Endothelial cell of umbilical vein (primary cell): ENCODE measurements at regions of chr7 and their contacts with region 1.

Region 1: DNA sequence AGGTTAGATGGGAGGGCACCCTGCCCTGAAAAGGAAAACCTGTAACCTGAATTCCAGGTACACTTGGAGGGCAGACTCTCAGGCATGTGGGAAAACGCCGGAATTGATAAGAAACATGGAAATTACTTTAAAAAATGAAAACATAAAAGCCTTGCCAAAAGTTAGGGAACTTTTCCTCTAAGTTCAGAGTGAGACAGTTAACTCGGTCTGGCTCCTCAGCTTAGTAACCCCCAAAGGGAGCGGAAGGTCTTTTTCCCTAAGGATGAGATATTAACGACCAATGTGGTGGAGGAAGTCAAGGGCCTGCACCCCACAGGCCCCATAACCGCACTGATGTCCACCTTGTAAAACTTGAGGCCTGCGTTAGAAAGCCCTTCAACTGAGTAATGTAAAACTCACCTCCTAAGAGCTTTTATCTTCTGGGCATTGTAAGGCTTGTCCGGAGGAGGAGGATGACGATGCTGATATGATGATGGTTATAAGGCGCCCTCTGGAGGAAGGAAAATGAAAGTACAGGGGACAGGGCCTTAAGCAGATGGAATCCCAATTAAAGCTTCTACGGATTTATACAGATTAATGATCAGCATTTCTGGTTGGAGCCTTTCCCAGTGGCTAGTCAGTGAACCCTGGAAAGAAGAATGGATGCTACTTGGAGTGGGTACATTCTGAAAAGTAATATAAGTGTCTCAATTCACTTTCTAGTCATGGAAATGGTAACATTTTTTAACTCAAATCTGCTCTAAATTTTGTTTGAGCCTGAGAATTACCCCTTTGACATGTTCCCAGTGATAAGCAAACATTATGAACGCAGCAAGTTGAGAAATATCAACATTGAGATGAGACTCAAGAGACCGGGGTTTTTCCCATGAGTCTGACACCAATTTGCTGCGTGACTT is 694 bp downstream of the COL1A2 start:
- DNase-seq: peak; percentile 86
- H3K4me3 ChIP-seq: peak overlapping the region in 2 of 3 experiments; percentile 4 to 42
- H3K27ac ChIP-seq: no peak overlapping the region
- H3K4me1 ChIP-seq: peaks cover 10% of the 10 kb centered on the region
- H3K27me3 ChIP-seq: no peaks in the 10 kb centered on the region
- CTCF ChIP-seq: peak; percentile 61 to 70
- POLR2A ChIP-seq: no peak

Region 2: DNA sequence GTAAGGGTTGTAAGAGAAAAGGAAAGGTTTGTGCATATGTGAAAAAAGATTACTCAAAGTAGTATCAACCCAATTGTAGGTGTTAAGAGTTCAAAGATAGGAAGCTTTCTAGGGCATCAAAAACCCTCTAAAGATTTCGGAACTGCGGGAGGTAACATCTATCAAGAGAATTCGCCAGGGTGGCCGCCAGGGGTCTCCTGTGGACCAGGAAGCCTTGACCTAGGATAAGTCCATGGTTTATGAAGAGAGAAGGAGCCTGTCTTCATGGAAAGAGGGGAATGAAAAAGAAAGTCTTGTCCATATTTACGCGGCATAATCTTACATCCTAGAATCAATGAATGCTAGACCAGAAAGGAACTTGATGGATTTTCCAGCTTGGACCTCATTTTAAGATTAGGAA is 680.2 kb before region 1 on chr7:
- CTCF ChIA-PET with region 1: interaction called, 10 read pairs
- POLR2A ChIA-PET with region 1: no interaction called
- dilution Hi-C with region 1: no loop called
- intact Hi-C with region 1: loop called (anchors 10 kb)
- DNase-seq: peak; percentile 58
- H3K4me3 ChIP-seq: no peak overlapping the region
- H3K27ac ChIP-seq: no peak overlapping the region
- H3K4me1 ChIP-seq: no peaks in the 10 kb centered on the region
- H3K27me3 ChIP-seq: peaks cover 15 to 26% of the 10 kb centered on the region in 2 experiments
- CTCF ChIP-seq: peak; percentile 71 to 72
- POLR2A ChIP-seq: no peak

Region 3: DNA sequence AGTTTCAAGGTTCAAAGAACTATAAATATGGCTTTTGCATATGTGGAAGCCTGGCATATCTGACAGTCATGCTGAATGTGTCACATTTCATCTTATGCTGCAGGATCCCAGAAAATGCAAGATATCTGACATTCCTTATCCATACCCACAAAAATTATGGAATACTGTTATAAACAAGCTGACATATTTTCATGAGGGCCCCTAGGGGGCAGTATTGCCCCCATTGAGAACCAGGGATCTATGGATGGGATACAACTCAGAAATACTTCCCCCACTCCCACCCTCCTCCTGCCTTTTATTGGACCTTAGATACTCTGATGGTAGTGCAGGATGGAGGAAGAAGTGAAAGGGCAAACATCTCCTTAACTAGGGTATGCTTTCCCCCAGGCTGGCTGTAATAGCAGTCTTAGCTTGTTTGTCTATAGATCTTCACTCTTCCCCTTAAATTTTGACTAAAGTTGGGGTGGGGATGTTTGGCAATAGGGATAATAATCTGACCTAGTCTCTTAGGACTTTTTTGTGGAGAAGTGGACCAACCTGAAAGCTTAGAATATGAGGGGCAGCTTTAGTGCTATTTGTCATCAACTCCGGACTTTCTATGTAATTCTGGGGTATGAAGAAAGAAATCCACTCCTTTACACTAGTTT is 492.5 kb before region 1 on chr7:
- CTCF ChIA-PET with region 1: interaction called, 10 read pairs
- POLR2A ChIA-PET with region 1: no interaction called
- dilution Hi-C with region 1: no loop called
- intact Hi-C with region 1: no loop called
- DNase-seq: peak; percentile 83
- H3K4me3 ChIP-seq: no peak overlapping the region
- H3K27ac ChIP-seq: no peak overlapping the region
- H3K4me1 ChIP-seq: peaks cover 7% of the 10 kb centered on the region
- H3K27me3 ChIP-seq: peaks cover 3 to 12% of the 10 kb centered on the region in 2 experiments
- CTCF ChIP-seq: peak; percentile 75
- POLR2A ChIP-seq: no peak

Region 4: DNA sequence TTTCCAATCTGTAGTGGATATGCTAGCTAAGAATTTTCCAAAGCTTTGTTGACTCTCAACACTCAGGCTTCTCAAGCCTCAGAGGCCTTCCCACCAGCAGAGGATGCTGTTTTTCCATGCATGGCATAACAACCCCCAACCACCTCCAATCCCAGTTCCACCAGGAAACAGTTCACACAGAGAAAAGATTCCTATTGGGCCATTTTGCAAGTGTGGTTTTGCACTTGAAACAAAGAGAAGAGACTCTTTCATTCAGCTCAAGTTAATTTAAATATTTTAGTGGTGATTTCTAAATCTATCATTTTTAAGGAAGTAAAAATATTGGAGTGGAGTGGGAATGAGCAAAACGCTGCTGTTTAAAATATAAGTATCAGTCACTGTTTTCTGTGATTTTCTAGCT is 106.3 kb before region 1 on chr7:
- CTCF ChIA-PET with region 1: interaction called, 868 read pairs
- POLR2A ChIA-PET with region 1: interaction called, 5 read pairs
- dilution Hi-C with region 1: no loop called
- intact Hi-C with region 1: loop called (anchors 1 kb)
- DNase-seq: peak; percentile 87
- H3K4me3 ChIP-seq: no peak overlapping the region
- H3K27ac ChIP-seq: no peak overlapping the region
- H3K4me1 ChIP-seq: no peaks in the 10 kb centered on the region
- H3K27me3 ChIP-seq: no peaks in the 10 kb centered on the region
- CTCF ChIP-seq: peak; percentile 90 to 96
- POLR2A ChIP-seq: no peak

Region 5: GRCh38 chr7:94313926-94314325 is 81.5 kb before region 1 on chr7:
- CTCF ChIA-PET with region 1: interaction called, 31 read pairs
- POLR2A ChIA-PET with region 1: no interaction called
- dilution Hi-C with region 1: no loop called
- intact Hi-C with region 1: loop called (anchors 1 kb)
- DNase-seq: peak; percentile 96
- H3K4me3 ChIP-seq: peak overlapping the region in 1 of 3 experiments; percentile 33
- H3K27ac ChIP-seq: peak overlapping the region; percentile 78
- H3K4me1 ChIP-seq: peaks cover 34% of the 10 kb centered on the region
- H3K27me3 ChIP-seq: no peaks in the 10 kb centered on the region
- CTCF ChIP-seq: no peak
- POLR2A ChIP-seq: peak; percentile 24

Region 6: DNA sequence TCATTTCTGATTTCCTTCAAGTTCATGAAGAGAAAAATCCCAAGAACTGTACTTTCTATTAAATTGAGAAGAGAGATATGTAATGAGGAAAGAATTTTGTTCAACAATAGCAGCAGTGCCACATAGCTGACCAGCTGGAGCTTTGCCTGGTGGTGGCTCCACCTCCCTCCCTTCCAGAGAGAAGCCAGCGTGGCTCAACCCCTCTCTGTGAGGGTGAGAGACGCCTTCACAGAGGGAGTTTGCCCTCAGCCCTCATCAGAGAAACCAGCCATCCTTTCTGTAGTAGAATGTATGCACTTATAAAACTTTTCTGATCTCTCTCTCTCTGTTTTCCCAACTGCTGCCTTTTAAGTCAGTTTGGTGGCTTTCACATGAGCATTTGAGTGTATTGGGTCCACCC is 21.2 kb before region 1 on chr7:
- CTCF ChIA-PET with region 1: interaction called, 54 read pairs
- POLR2A ChIA-PET with region 1: no interaction called
- dilution Hi-C with region 1: no loop called
- intact Hi-C with region 1: loop called (anchors 1 kb)
- DNase-seq: peak; percentile 92
- H3K4me3 ChIP-seq: no peak overlapping the region
- H3K27ac ChIP-seq: peak overlapping the region; percentile 85
- H3K4me1 ChIP-seq: peaks cover 21% of the 10 kb centered on the region
- H3K27me3 ChIP-seq: no peaks in the 10 kb centered on the region
- CTCF ChIP-seq: no peak
- POLR2A ChIP-seq: no peak

Region 7: DNA sequence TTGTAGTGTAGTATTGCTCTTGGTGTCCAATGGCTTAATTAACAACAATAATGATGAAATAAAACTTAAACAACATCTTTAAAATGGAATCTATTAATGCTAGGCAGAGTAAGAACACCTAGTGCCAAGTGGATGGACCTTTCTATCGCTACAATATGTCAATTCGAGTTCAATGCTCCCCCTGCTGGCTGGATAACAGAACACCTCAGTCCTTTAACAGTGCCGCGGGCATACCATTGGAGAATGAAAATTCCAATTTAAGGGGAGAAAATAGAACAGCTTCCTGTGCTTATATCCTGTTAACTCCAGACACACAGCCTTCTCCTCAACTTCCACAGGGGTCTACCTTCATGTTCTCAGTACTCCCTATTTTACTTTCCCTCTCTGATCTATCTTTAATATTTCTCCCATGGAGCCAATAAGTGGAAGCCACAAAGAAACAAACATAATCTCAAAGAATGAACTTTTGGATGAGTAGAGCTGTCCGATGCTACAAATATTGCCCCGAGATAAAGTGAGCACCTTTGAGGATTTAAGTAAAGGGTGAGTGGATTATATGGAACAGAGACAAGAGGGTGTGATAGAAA is 40.7 kb after region 1 on chr7:
- CTCF ChIA-PET with region 1: interaction called, 52 read pairs
- POLR2A ChIA-PET with region 1: no interaction called
- dilution Hi-C with region 1: no loop called
- intact Hi-C with region 1: loop called (anchors 1 kb)
- DNase-seq: peak; percentile 69
- H3K4me3 ChIP-seq: no peak overlapping the region
- H3K27ac ChIP-seq: no peak overlapping the region
- H3K4me1 ChIP-seq: no peaks in the 10 kb centered on the region
- H3K27me3 ChIP-seq: peaks cover 0 to 4% of the 10 kb centered on the region in 2 experiments
- CTCF ChIP-seq: peak; percentile 73 to 83
- POLR2A ChIP-seq: no peak

Region 8: DNA sequence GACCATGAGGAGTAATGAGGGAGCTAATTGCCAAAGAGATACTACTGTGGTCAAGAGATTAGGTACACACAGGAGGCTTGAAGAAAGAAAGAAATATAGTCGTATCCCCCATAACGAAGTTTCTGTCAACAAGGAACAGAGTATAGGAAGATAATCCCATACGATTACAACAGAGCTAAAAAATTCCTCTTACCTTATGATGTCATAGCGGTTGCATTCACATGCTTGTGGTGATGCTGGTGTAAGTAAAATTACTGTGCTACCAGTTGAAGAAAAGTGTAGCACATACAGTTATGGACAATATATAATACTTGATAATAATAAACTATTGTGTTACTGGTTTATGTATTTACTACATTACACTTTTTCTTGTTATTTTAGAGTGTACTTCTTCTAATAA is 62.7 kb after region 1 on chr7:
- CTCF ChIA-PET with region 1: no interaction called
- POLR2A ChIA-PET with region 1: no interaction called
- dilution Hi-C with region 1: no loop called
- intact Hi-C with region 1: no loop called
- DNase-seq: no peak
- H3K4me3 ChIP-seq: no peak overlapping the region
- H3K27ac ChIP-seq: no peak overlapping the region
- H3K4me1 ChIP-seq: peaks cover 3% of the 10 kb centered on the region
- H3K27me3 ChIP-seq: no peaks in the 10 kb centered on the region
- CTCF ChIP-seq: no peak
- POLR2A ChIP-seq: no peak